ENCODE measurements at regions of chr10 and their contacts with region 1.

Region 1: GRCh38 chr10:97498076-97498840 is at the start of gene MMS19:
- DNase-seq: peak; percentile 97 to 100 (median 98)

Region 2: GRCh38 chr10:97445722-97446639 is 52.3 kb before region 1 on chr10 and contains the starts of genes EXOSC1 and ZDHHC16:
- intact Hi-C with region 1: loop called (anchors 5 kb)
- DNase-seq: peak; percentile 87 to 99 (median 94)

Region 3: DNA sequence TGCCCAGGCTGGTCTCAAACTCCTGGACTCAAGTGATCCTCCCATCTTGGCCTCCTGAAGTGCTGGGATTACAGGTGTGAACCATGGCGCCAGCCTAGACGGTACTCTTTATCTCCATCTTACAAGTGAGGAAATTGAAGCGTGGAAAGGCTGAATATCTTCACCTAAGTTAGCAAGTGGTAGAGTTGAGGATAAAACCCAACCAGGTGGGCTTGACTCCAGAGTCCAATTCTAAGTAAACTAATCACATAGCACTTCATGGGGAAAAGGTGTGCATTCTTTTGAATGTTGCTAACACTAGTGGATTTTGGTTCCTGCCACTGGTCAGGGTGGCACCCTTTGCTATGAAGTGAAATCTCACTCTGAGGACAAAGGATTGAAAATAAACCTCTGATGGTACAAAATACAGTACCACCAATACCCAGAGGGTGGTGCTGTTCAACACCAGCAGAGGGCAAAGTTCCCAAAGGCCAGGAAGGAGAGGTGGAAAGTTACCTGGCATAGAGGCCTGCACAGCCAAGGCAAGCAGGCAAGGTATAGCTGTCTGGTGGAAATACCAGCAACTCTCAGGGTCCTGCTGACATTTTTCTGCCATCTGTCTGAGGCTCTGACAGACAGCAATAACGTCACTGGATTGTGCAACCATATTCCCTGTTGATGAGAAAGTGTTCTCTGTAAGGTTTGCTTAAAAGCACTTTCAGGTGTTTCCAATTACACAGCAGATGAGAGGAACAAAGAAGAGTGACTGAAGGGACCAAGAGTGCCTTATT is 34.7 kb before region 1 on chr10:
- intact Hi-C with region 1: loop called (anchors 5 kb)
- DNase-seq: peak in 3 of 10 donors; percentile 22 to 41 (median 23)

Region 4: DNA sequence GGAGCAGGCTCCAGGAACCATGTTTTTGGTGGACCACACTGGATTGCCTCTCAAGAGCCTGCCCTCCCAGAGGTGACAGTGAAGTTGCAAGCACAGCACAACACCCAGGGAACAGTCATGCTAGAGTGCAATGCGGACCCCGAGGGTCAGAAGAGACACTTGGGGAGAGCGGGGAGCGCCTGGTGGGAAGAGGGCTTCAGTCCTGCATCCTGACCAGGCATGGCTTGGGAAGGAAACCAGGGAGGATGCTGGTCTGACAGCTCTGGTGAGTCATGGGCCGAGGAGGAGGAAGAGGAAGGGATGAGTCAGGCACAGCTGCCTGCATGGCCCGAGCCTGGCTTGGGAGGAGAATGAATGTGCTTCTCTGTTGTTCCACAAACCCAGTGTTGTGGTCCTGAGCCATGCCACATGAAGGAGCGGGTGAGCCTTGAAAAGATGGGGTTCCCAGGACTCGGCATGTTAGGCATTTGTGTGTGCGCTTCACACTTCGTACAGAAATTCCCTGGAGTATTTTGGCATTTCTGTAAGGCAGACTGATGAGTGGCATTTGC is 44.8 kb after region 1 on chr10:
- intact Hi-C with region 1: loop called (anchors 2 kb)
- DNase-seq: peak; percentile 78 to 98 (median 82)